Naive thymus-derived CD8-positive, alpha-beta T cell (primary cell): ENCODE measurements at regions of chr4 and their contacts with region 1.

Region 1: DNA sequence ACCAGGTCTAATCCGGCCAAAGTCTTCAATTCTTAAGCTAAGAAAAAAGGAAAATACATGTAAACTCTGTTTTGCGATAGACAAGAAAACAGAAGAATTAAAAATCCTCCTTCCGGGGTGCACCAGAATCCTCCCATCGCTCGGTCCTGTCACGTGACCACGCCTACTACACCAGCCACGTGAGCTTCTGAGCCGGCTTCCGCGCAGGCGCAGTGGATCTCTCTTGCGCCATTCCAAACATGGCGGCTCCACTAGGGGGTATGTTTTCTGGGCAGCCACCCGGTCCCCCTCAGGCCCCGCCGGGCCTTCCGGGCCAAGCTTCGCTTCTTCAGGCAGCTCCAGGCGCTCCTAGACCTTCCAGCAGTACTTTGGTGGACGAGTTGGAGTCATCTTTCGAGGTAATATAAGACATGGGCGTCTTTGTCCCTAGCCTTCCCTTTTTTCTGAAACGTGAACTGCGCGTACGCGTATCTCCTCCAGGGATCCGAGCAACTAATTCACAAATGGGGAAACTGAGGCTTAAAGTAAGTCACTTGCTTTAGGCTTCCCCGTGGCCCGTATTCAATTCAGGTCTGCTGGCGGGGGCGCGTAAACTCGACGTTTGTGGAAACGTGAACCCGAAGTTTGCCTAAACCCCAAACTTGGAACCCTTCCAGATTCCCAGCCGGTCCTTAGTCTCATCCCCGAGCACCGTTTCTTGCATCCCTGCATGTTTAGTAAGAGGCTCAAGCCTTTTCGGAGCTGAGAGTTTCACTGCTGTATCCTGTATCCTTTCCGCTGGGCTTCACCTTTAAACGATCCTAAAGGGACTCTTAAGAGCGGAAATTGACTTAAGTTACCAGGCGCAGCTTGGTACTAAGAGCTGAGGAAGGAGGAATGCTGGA is at the start of gene MED28:
- DNase-seq: peak; percentile 91 to 98 (median 94)
- ATAC-seq: peak; percentile 89 to 93
- H3K4me3 Mint-ChIP-seq: peak within 1 kb of the TSS; percentile 88 to 100 (median 98)
- H3K27ac Mint-ChIP-seq: peak within 1 kb of the TSS; percentile 92 to 99 (median 98)
- H3K4me1 Mint-ChIP-seq: peaks cover 17 to 52% (median 42%) of the 10 kb centered on the region in 4 donors
- H3K27me3 Mint-ChIP-seq: no peaks in the 10 kb centered on the region
- polyA plus RNA-seq, gene MED28: 39.1 to 48.7 (median 42.1) TPM

Region 2: DNA sequence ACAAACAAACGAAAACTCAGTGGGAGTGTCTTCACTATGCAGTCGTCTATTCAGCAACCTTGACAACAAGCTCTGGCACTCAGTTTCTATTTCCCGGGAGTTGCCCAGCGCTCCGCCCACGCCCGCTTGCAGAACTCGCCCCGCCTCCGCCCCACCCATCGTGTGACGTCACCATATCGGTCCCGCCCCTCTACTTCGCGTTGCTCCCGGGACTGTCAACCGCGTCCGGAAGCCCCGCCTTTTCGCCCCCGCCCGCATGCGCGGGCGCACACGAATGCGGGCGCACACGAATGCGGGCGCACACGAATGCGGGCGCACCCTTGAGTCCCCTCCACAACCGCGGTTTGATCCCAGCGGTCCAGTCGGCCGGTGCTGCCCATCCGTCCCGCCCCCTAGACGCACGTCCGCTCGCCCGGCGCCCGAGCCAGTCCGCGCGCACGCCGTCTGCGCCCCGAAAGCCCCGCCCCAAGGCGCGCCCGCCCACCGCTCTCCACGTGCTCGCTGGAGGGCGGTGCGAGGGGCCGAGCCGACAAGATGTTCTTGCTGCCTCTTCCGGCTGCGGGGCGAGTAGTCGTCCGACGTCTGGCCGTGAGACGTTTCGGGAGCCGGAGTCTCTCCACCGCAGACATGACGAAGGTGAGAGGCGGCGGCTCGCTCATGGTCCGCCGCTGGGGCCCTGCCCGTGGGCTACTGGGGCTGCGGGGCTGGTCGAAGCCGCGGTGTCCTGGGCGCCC is 37.6 kb before region 1 on chr4 and contains the start of gene LAP3:
- POLR2A ChIA-PET with region 1: interaction called, 22 read pairs
- DNase-seq: peak; percentile 97 to 100 (median 99)
- ATAC-seq: peak; percentile 86 to 89
- H3K4me3 Mint-ChIP-seq: peak within 1 kb of the TSS; percentile 87 to 97 (median 92)
- H3K27ac Mint-ChIP-seq: peak within 1 kb of the TSS; percentile 94 to 100 (median 98)
- H3K4me1 Mint-ChIP-seq: peaks cover 14 to 35% (median 28%) of the 10 kb centered on the region in 4 donors
- H3K27me3 Mint-ChIP-seq: no peaks in the 10 kb centered on the region
- polyA plus RNA-seq, gene LAP3: 37.3 to 44.7 (median 42.0) TPM

Region 3: DNA sequence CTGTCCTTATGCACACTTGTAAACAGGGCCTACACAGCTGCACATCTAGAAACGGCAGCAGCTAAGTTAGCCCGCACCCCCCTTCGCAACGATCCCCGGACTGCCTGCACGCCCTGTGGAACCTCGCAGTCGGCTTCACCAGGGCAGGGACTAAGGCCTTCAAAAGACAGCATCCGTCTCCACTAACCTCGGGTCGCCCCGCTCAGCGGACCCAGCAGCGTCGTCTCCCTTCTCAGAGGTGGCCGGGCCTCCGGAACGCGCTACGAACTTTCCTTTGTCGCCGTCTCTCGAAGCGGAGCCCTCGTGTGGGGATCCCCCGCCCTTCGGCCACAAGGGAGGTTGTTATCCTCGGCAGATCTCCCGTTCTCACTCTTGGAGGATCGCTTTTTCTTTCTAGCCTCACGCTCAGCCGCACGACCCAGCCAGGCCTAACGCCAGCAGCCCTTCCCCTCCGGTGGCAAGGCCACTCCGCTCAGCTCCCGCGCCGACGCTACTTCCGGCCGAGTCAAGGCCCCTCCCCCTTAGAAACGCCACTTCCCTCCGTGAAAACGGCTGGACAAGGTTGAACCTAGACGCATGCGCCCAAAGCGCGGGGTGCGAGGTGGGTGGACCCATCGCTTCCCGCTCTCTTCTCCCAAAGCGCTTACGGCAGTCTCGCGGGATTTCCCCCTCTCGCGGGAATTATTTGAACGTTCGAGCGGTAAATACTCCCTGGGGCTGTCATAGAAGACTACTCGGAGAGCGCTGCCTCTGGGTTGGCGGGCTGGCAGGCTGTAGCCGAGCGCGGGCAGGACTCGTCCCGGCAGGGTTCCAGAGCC is 195.8 kb after region 1 on chr4 and contains the starts of genes DCAF16 and NCAPG:
- POLR2A ChIA-PET with region 1: interaction called, 17 read pairs
- DNase-seq: peak; percentile 93 to 99 (median 98)
- ATAC-seq: peak; percentile 85 to 90
- H3K4me3 Mint-ChIP-seq: peak within 1 kb of the TSS; percentile 91 to 100 (median 97)
- H3K27ac Mint-ChIP-seq: peak within 1 kb of the TSS; percentile 97 to 100 (median 98)
- H3K4me1 Mint-ChIP-seq: peaks cover 25 to 66% (median 53%) of the 10 kb centered on the region in 4 donors
- H3K27me3 Mint-ChIP-seq: no peaks in the 10 kb centered on the region
- polyA plus RNA-seq, gene DCAF16: 18.4 to 23.1 (median 21.2) TPM
- polyA plus RNA-seq, gene NCAPG: 0.24 TPM in 1 of 3 donors, not detected in the others